Posterior vena cava (tissue), 2 donors: ENCODE measurements at regions of chr9 and their contacts with region 1.

Region 1: GRCh38 chr9:134514503-134514902 is 127.1 kb upstream of the COL5A1 start:
- DNase-seq: no peak

Region 2: GRCh38 chr9:134391314-134392231 is 122.9 kb before region 1 on chr9:
- intact Hi-C with region 1: no loop called
- DNase-seq: no peak

Region 3: DNA sequence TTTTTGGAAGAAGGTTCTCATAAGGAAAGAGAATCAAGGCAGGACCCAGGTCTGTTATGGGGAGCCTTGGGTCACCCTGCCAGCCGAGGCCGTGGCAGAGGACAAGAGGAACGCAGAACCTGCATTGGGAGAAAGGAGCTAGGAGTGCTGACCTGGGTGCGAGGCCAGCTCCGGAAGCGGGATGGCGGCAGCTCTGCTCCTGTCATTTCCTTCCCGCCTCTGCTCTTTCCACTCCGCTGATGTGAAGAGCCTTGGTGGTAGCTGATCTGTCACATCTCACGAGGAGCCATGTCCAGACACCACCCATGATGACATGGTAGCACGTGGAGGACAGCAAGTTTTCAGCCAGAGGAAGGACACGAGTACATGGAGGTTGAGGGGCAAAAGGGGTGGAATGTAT is 17.6 kb after region 1 on chr9:
- intact Hi-C with region 1: loop called in 1 of 2 experiments (anchors 1 kb)
- DNase-seq: peak; percentile 22